ENCODE measurements at regions of chr14 and their contacts with region 1.

Region 1: GRCh38 chr14:87152693-87153092 is 840.3 kb downstream of the GALC start:
- DNase-seq: peak; percentile 88
- H3K4me3 ChIP-seq: peak overlapping the region; percentile 49
- H3K27ac ChIP-seq: peak overlapping the region; percentile 80
- H3K4me1 ChIP-seq: peaks cover 66% of the 10 kb centered on the region
- CTCF ChIP-seq: no peak

Region 2: DNA sequence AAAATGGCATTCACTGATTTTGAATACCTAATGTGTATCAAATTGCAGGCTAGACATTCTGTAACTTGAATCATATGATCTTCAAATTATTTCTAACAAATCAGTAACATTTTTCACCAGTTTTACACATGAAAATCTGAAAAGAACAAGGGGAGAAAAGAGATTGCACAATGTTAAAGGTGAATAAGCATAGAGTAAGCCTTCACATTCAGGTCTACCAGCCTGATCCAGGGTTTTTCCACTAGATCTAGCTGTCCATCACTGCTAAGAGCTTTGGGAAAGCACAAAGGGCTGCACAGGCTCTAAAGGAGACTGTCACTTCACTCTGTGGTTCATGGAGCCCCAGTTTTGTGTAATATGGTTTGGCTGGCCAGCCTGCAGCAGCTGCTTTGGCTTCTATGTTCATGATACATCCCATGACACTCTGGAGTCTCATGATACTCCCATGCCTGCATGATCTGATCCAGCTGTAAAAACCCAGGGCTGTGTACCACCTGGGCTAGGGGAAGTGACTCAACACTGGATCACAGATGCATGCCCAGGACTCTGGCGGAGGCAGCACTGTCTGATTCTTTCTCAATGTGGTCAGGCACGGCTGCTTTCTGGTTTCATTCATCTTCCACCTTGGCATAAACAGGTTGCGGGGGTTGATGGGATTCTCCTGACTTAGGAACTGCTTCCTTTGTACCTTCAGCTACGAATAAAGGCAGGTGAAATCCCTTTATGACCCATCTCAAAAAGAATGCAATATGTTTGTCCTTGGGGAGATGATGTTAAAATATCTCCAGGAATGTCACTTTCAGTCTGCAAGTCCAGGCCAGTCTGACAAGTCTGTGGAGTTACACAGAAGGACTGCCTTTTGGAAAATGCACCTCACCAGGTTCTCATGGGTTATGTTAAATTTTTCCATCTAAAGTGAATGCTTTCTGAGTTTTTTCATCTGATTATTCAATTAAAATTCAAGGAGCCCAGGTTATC is 19.3 kb before region 1 on chr14:
- CTCF ChIA-PET with region 1: no interaction called
- POLR2A ChIA-PET with region 1: interaction called, 15 read pairs
- intact Hi-C with region 1: no loop called
- DNase-seq: peak; percentile 63
- H3K4me3 ChIP-seq: no peak overlapping the region
- H3K27ac ChIP-seq: peak overlapping the region; percentile 18
- H3K4me1 ChIP-seq: peaks cover 31% of the 10 kb centered on the region
- CTCF ChIP-seq: no peak

Measured in OCI-LY7 (cell line).